Ovary (tissue), 10 donors: ENCODE measurements at regions of chr4 and their contacts with region 1.

Region 1: GRCh38 chr4:143482840-143483239 is 30.7 kb upstream of the SMARCA5 start:
- DNase-seq: peak in 2 of 5 donors; percentile 24 to 34
- H3K4me3 ChIP-seq: no peak overlapping the region
- H3K27ac ChIP-seq: no peak overlapping the region
- H3K4me1 ChIP-seq: no peaks in the 10 kb centered on the region
- H3K27me3 ChIP-seq: no peaks in the 10 kb centered on the region
- CTCF ChIP-seq: peak; percentile 59 to 78 (median 78)
- EP300 ChIP-seq: no peak
- POLR2A ChIP-seq: no peak

Region 2: DNA sequence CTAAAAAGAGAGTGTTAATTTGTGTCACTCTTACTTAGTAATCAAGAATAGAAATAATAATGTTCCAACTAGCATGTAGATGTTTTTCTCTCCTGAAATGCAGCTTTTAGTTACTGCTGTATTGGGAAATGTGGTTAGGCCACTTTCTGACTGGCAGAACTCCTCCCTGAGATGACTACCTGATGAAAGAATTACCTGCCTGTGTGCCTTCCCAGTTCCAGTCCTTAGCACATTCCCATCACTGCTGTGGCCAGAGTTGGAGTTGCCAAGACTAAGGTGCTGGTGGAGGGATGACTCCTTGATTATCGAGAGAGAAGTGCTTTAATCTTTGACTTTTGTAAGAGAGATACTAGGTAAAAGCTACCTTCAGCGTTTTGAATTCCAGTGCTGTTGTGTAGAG is 136.6 kb before region 1 on chr4:
- intact Hi-C with region 1: loop called in 1 of 4 experiments (anchors 10 kb)
- DNase-seq: no peak
- H3K4me3 ChIP-seq: no peak overlapping the region
- H3K27ac ChIP-seq: no peak overlapping the region
- H3K4me1 ChIP-seq: peaks cover 15% of the 10 kb centered on the region
- H3K27me3 ChIP-seq: no peaks in the 10 kb centered on the region
- CTCF ChIP-seq: no peak
- EP300 ChIP-seq: no peak
- POLR2A ChIP-seq: no peak

Region 3: GRCh38 chr4:143451186-143451585 is 31.7 kb before region 1 on chr4:
- intact Hi-C with region 1: no loop called
- DNase-seq: no peak
- H3K4me3 ChIP-seq: no peak overlapping the region
- H3K27ac ChIP-seq: no peak overlapping the region
- H3K4me1 ChIP-seq: peaks cover 2% of the 10 kb centered on the region
- H3K27me3 ChIP-seq: no peaks in the 10 kb centered on the region
- CTCF ChIP-seq: no peak
- EP300 ChIP-seq: no peak
- POLR2A ChIP-seq: no peak